GM12878 (cell line): ENCODE measurements at regions of chr11 and their contacts with region 1.

Region 1: DNA sequence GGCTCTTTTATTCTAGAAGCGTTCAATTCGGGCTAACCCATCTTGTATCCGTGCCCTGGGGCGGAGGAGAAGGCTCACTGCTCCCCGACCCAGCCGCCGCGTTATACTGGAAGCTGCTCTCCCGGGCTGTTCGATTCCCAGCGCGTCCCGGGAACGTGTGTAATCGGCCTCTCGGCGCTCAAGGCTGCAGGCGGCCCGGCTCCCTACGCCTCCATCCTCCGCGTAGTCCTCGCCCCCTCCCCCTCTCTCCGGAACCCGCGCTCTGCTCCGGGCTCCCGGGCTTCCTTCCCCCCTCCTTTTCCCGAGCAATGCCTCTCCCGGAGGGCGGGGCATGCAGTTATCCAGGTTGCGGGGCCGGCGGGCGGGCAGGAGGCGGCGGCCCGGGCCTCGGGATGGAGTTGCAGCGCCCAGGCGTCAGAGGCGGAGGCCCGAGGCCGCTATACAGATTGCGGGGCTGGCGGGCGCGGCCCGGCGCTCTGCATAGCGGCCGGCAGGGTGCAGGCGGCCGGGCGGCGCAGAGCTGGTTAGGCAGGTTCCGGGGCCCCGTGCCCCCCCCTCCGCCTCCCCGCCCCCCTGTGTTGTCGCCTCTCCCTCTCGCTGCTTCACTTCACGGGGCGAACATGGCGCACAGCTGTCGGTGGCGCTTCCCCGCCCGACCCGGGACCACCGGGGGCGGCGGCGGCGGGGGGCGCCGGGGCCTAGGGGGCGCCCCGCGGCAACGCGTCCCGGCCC is at the start of gene KMT2A:
- DNase-seq: no peak
- ATAC-seq: peak; percentile 54
- H3K4me3 ChIP-seq: peak within 1 kb of the TSS; percentile 94
- H3K27ac ChIP-seq: peak within 1 kb of the TSS; percentile 94
- H3K4me1 ChIP-seq: peaks cover 5% of the 10 kb centered on the region; the same call in 1 of the 2 replicates
- H3K27me3 ChIP-seq: no peaks in the 10 kb centered on the region
- CTCF ChIP-seq: no peak
- EP300 ChIP-seq: no peak
- POLR2A ChIP-seq: peak; percentile 74
- RAD21 ChIP-seq: no peak
- polyA plus RNA-seq, gene KMT2A: 6.1 to 7.4 TPM

Region 2: DNA sequence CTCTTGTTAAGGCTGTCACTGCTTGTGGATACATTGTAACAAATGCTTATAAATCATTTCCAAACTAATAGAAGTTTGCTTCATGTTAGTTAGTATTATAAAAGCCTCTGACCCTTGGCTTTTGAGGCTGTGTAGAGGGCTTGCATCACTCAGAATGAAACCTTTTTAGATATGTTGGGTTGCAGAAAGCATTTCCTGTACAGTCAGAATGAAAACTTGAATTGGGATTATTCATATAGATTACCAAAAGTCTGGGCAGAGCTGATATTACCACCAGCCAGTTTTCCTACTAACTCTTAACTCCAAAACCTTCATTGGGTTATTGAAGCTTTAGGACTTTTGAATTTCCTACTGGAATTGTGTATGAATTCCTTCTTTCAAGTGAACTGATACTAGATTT is 12.2 kb after region 1 on chr11:
- CTCF ChIA-PET with region 1: interaction called, 10 read pairs
- POLR2A ChIA-PET with region 1: interaction called, 14 read pairs
- RAD21 ChIA-PET with region 1: interaction called, 16 read pairs
- SMC1A ChIA-PET with region 1: interaction called, 11 read pairs
- in situ Hi-C with region 1: no loop called
- intact Hi-C with region 1: no loop called
- DNase-seq: peak; percentile 67
- ATAC-seq: peak; percentile 88
- H3K4me3 ChIP-seq: no peak overlapping the region
- H3K27ac ChIP-seq: peak overlapping the region; percentile 65; the same call in 1 of the 2 replicates
- H3K4me1 ChIP-seq: peaks cover 27% of the 10 kb centered on the region
- H3K27me3 ChIP-seq: no peaks in the 10 kb centered on the region
- CTCF ChIP-seq: no peak
- EP300 ChIP-seq: peak; percentile 41 to 91; a peak in 3 of 4 replicates
- POLR2A ChIP-seq: no peak
- RAD21 ChIP-seq: no peak

Region 3: DNA sequence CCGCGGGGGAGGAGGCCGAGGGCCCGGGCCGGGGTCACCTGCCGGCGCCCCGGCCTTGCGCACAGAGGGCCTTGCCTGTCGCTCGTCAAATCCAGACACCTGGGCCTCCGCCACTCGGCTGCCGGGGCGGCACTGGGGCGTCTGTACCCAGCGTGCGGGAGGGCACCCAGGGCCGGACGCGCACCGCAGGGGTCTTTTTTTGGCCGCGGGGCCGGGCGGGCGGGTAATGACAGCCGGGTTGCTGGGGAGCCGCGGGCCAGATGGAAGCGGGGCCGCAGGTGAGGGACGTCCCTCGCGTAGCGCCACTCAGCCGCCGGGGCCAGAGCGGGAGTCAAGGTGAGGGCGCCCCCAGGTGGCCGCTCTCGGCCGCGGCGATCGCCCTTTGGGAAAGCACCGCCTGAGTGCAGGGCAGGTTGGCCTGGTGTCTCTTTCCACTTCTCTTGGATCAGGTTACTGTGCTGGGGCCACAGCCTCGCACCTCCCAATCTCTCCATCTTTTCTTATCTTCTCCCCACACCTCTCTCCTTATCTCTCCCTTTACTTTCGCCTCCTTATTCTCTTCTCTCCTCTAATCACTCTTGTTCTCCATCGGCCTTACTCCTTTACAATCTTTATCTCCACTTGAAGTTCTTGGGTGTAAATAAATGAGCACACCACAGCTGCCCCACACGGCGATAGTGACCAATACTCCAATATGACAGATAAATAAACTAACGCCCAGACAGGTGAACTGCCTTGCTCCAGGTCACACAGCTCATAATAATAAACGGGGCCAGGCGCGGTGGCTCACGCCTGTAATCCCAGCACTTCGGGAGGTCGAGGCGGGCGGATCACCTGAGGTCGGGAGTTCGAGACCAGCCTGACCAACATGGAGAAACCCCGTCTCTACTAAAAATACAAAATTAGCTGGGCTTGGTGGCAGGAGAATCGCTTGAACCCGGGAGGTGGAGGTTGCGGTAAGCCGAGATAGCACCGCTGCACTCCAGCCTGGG is 175.0 kb after region 1 on chr11:
- CTCF ChIA-PET with region 1: no interaction called
- POLR2A ChIA-PET with region 1: no interaction called
- RAD21 ChIA-PET with region 1: no interaction called
- SMC1A ChIA-PET with region 1: no interaction called
- in situ Hi-C with region 1: no loop called
- intact Hi-C with region 1: no loop called
- DNase-seq: no peak
- ATAC-seq: peak; percentile 84
- H3K4me3 ChIP-seq: no peak overlapping the region; the same call in 1 of the 2 replicates
- H3K27ac ChIP-seq: no peak overlapping the region
- H3K4me1 ChIP-seq: peaks cover 8% of the 10 kb centered on the region
- H3K27me3 ChIP-seq: peaks cover 22 to 36% of the 10 kb centered on the region in 2 experiments; a peak in 3 of 4 replicates
- CTCF ChIP-seq: peak; percentile 72 to 88 (median 87); a peak in 5 of 6 replicates
- EP300 ChIP-seq: no peak
- POLR2A ChIP-seq: no peak
- RAD21 ChIP-seq: peak; percentile 46